GM12878 (cell line): ENCODE measurements at regions of chr12 and their contacts with region 1.

Region 1: GRCh38 chr12:40224439-40225291 is at the start of gene LRRK2:
- DNase-seq: no peak
- ATAC-seq: peak; percentile 69
- H3K4me3 ChIP-seq: peak within 1 kb of the TSS; percentile 59
- H3K27ac ChIP-seq: peak within 1 kb of the TSS; percentile 46
- H3K4me1 ChIP-seq: peaks cover 9% of the 10 kb centered on the region
- H3K27me3 ChIP-seq: peaks cover 0 to 17% of the 10 kb centered on the region in 2 experiments; a peak in 1 of 4 replicates
- CTCF ChIP-seq: no peak
- EP300 ChIP-seq: peak; percentile 61 to 70; a peak in 2 of 4 replicates
- POLR2A ChIP-seq: peak; percentile 61
- RAD21 ChIP-seq: no peak
- polyA plus RNA-seq, gene LRRK2: 0.97 to 1.1 TPM

Region 2: GRCh38 chr12:39619660-39620433 is 604.8 kb before region 1 on chr12 and contains the start of gene ABCD2:
- CTCF ChIA-PET with region 1: no interaction called
- POLR2A ChIA-PET with region 1: no interaction called
- RAD21 ChIA-PET with region 1: no interaction called
- SMC1A ChIA-PET with region 1: no interaction called
- in situ Hi-C with region 1: no loop called
- intact Hi-C with region 1: loop called (anchors 10 kb)
- DNase-seq: peak; percentile 97
- ATAC-seq: peak; percentile 62
- H3K4me3 ChIP-seq: peak within 1 kb of the TSS; percentile 95
- H3K27ac ChIP-seq: peak within 1 kb of the TSS; percentile 98
- H3K4me1 ChIP-seq: peaks cover 16% of the 10 kb centered on the region
- H3K27me3 ChIP-seq: no peaks in the 10 kb centered on the region
- CTCF ChIP-seq: peak; percentile 3 to 30 (median 21); a peak in 2 of 6 replicates
- EP300 ChIP-seq: peak; percentile 32 to 86; a peak in 3 of 4 replicates
- POLR2A ChIP-seq: peak; percentile 62
- RAD21 ChIP-seq: no peak
- polyA plus RNA-seq, gene ABCD2: 4.4 to 5.7 TPM

Region 3: DNA sequence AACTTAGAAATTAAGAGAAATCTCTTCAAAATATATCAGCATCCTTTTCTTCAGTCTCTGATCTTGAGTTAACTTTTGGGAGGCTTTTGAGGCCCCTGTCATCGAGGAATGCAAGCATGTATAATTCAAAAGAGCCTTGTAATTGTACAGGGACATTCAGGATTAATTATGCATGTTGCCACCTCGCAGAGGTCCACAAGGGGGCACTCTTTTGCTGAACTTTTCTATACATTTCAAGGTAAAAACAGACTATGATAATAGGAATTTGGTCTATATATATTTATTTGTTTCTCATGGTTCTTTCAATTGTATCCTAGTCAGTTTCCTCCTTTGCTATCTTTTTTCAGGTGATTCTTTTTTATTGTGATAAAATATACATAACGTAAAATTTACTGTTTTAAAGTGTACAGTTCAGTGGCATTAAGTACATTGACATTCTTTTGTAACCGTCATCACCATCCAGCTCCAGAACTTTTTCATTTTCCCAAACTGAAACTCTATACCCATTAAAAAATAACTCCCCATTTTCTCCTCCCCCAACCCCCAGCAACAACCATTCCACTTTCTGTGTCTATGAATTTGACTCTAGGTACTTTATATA is 71.8 kb before region 1 on chr12:
- CTCF ChIA-PET with region 1: interaction called, 12 read pairs
- POLR2A ChIA-PET with region 1: interaction called, 4 read pairs
- RAD21 ChIA-PET with region 1: interaction called, 15 read pairs
- SMC1A ChIA-PET with region 1: interaction called, 65 read pairs
- in situ Hi-C with region 1: no loop called
- intact Hi-C with region 1: loop called (anchors 1 kb)
- DNase-seq: no peak
- ATAC-seq: peak; percentile 78
- H3K4me3 ChIP-seq: no peak overlapping the region
- H3K27ac ChIP-seq: no peak overlapping the region
- H3K4me1 ChIP-seq: no peaks in the 10 kb centered on the region
- H3K27me3 ChIP-seq: no peaks in the 10 kb centered on the region
- CTCF ChIP-seq: peak; percentile 50 to 69 (median 66); a peak in 5 of 6 replicates
- EP300 ChIP-seq: no peak
- POLR2A ChIP-seq: no peak
- RAD21 ChIP-seq: peak; percentile 84

Region 4: DNA sequence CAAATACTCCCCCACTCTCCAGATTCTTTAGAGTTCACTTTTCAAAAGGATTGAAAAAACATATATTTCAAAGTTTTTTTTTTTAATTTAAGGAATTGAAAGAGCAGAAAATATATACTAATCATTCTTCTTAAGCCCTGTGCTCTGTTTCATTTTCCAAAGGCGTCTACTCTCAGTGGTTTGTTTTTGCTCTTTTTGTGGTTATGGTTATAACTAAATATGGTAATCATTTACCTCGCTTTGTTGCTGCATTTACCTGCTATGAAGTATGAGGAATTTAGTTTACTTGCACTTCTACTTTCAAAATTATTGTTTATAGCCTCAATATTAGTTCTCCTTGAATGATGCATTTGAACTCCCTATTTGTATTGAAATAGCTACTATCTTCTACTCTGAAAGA is 55.8 kb before region 1 on chr12:
- CTCF ChIA-PET with region 1: interaction called, 4 read pairs
- POLR2A ChIA-PET with region 1: no interaction called
- RAD21 ChIA-PET with region 1: interaction called, 15 read pairs
- SMC1A ChIA-PET with region 1: interaction called, 7 read pairs
- in situ Hi-C with region 1: loop called (anchors 5 kb)
- intact Hi-C with region 1: loop called (anchors 1 kb)
- DNase-seq: peak; percentile 55
- ATAC-seq: peak; percentile 94
- H3K4me3 ChIP-seq: 0 out of 2 replicates have a peak overlapping the region, but pooled peaks have one; percentile 9
- H3K27ac ChIP-seq: peak overlapping the region; percentile 56; the same call in 1 of the 2 replicates
- H3K4me1 ChIP-seq: peaks cover 10% of the 10 kb centered on the region
- H3K27me3 ChIP-seq: peaks cover 0 to 2% of the 10 kb centered on the region in 2 experiments; a peak in 1 of 4 replicates
- CTCF ChIP-seq: no peak
- EP300 ChIP-seq: peak; percentile 66 to 91
- POLR2A ChIP-seq: no peak
- RAD21 ChIP-seq: no peak

Region 5: GRCh38 chr12:40208707-40209446 is 15.8 kb before region 1 on chr12:
- CTCF ChIA-PET with region 1: interaction called, 21 read pairs
- POLR2A ChIA-PET with region 1: interaction called, 15 read pairs
- RAD21 ChIA-PET with region 1: interaction called, 44 read pairs
- SMC1A ChIA-PET with region 1: interaction called, 60 read pairs
- in situ Hi-C with region 1: no loop called
- intact Hi-C with region 1: no loop called
- DNase-seq: no peak
- ATAC-seq: peak; percentile 94
- H3K4me3 ChIP-seq: no peak overlapping the region
- H3K27ac ChIP-seq: no peak overlapping the region
- H3K4me1 ChIP-seq: peaks cover 8% of the 10 kb centered on the region
- H3K27me3 ChIP-seq: no peaks in the 10 kb centered on the region
- CTCF ChIP-seq: no peak
- EP300 ChIP-seq: no peak
- POLR2A ChIP-seq: no peak
- RAD21 ChIP-seq: no peak